CD4-positive, alpha-beta T cell (primary cell): ENCODE measurements at regions of chr22 and their contacts with region 1.

Region 1: GRCh38 chr22:31107178-31107893 is at the start of gene SELENOM:
- DNase-seq: peak; percentile 71 to 95 (median 82)
- ATAC-seq: peak; percentile 90
- H3K4me3 ChIP-seq: peak within 1 kb of the TSS; percentile 75
- H3K4me3 Mint-ChIP-seq: peak within 1 kb of the TSS; percentile 97
- H3K27ac ChIP-seq: peak within 1 kb of the TSS; percentile 24 to 51
- H3K27ac Mint-ChIP-seq: peak within 1 kb of the TSS; percentile 87
- H3K4me1 ChIP-seq: peaks cover 31% of the 10 kb centered on the region
- H3K4me1 Mint-ChIP-seq: peaks cover 24% of the 10 kb centered on the region
- H3K27me3 ChIP-seq: no peaks in the 10 kb centered on the region
- H3K27me3 Mint-ChIP-seq: no peaks in the 10 kb centered on the region
- CTCF ChIP-seq: peak; percentile 70
- total RNA-seq, gene SELENOM: 78.0 to 82.4 TPM

Region 2: GRCh38 chr22:30667494-30668385 is 439.6 kb before region 1 on chr22 and contains the start of gene DUSP18:
- CTCF ChIA-PET with region 1: no interaction called
- POLR2A ChIA-PET with region 1: no interaction called
- intact Hi-C with region 1: loop called in 1 of 2 experiments (anchors 1 kb)
- DNase-seq: peak; percentile 89 to 98 (median 94)
- ATAC-seq: peak; percentile 90
- H3K4me3 ChIP-seq: peak within 1 kb of the TSS; percentile 97
- H3K4me3 Mint-ChIP-seq: peak within 1 kb of the TSS; percentile 93
- H3K27ac ChIP-seq: no peak within 1 kb of the TSS
- H3K27ac Mint-ChIP-seq: peak within 1 kb of the TSS; percentile 74
- H3K4me1 ChIP-seq: peaks cover 27% of the 10 kb centered on the region
- H3K4me1 Mint-ChIP-seq: peaks cover 15% of the 10 kb centered on the region
- H3K27me3 ChIP-seq: no peaks in the 10 kb centered on the region
- H3K27me3 Mint-ChIP-seq: no peaks in the 10 kb centered on the region
- CTCF ChIP-seq: no peak
- total RNA-seq, gene DUSP18: 5.7 to 6.2 TPM

Region 3: DNA sequence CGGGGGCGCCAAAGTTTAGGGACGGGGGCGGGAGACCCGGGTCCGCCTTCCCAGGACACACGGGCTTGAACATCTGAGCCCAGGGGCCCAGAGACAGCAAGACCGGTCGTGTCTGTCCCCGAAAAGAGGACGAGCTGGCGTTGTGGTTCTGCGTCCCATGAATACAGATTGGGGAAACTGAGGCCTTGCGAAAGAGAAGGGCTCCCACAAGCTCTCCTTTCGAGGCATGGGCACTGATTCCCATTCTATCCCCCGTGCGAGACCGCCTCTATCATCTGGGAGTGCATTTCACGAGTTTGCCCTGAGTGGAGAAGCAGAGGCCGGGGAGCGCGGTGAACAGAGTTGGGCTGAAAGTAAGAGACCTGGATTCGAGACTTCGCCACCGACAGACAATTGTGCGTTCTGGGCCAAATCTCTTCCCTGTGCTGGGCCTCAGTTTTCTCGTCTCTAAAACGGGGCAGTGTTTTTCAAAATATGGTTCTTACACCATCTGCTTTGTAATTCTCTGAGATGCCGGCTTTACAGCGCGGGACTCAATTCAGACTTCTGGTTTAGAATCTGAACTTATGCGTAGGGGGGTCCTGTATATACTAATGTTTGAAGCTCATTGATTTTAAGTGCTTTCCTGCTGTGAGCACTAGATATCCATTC is 53.1 kb after region 1 on chr22:
- CTCF ChIA-PET with region 1: interaction called, 8 read pairs
- POLR2A ChIA-PET with region 1: interaction called, 19 read pairs
- intact Hi-C with region 1: loop called in 1 of 2 experiments (anchors 2 kb)
- DNase-seq: peak in 8 of 14 experiments; percentile 0 to 45 (median 7)
- ATAC-seq: peak; percentile 46
- H3K4me3 ChIP-seq: peak overlapping the region; percentile 96
- H3K4me3 Mint-ChIP-seq: peak overlapping the region; percentile 100
- H3K27ac ChIP-seq: peak overlapping the region; percentile 69 to 94
- H3K27ac Mint-ChIP-seq: peak overlapping the region; percentile 89
- H3K4me1 ChIP-seq: peaks cover 23% of the 10 kb centered on the region
- H3K4me1 Mint-ChIP-seq: peaks cover 48% of the 10 kb centered on the region
- H3K27me3 ChIP-seq: no peaks in the 10 kb centered on the region
- H3K27me3 Mint-ChIP-seq: no peaks in the 10 kb centered on the region
- CTCF ChIP-seq: no peak